ENCODE measurements at regions of chr2 and their contacts with region 1.

Region 1: GRCh38 chr2:95314964-95315611 is 17.9 kb downstream of the KCNIP3 start:
- DNase-seq: peak; percentile 65 to 74 (median 66)
- ATAC-seq: peak; percentile 84
- H3K4me3 ChIP-seq: no peak overlapping the region
- H3K27ac ChIP-seq: no peak overlapping the region
- H3K4me1 ChIP-seq: no peaks in the 10 kb centered on the region
- H3K27me3 ChIP-seq: no peaks in the 10 kb centered on the region
- CTCF ChIP-seq: peak; percentile 73 to 91 (median 90)
- POLR2A ChIP-seq: no peak

Region 2: DNA sequence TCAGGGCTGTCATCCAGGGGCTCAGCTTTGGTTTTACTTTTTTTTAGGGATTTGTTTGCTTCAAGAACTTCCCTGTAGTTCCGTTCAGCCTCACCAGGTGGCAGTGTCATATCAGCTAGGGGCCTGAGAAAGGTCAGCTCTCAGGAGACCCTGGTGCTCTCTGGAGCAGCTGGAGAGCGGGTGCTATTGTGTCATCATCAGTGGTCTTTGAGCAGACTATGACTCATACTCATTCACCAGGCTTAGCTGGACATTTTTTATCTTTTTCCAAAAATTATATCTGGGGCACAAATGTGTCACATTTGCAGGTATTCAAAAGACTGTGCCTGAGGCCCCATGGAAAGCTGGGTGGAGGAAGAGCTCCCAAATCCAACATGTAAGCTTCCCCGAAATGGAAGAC is 83.4 kb before region 1 on chr2:
- intact Hi-C with region 1: loop called (anchors 5 kb)
- DNase-seq: peak; percentile 75 to 86 (median 79)
- ATAC-seq: peak; percentile 45
- H3K4me3 ChIP-seq: no peak overlapping the region
- H3K27ac ChIP-seq: no peak overlapping the region
- H3K4me1 ChIP-seq: no peaks in the 10 kb centered on the region
- H3K27me3 ChIP-seq: no peaks in the 10 kb centered on the region
- CTCF ChIP-seq: peak; percentile 67 to 90 (median 83)
- POLR2A ChIP-seq: no peak

Measured in body of pancreas (tissue), 4 donors.